ENCODE measurements at regions of chr21 and their contacts with region 1.

Region 1: GRCh38 chr21:24118738-24119459 is 1488.4 kb downstream of the MRPL39 start:
- DNase-seq: peak; percentile 65
- ATAC-seq: peak; percentile 87
- H3K4me3 ChIP-seq: no peak overlapping the region; the same call in 1 of the 2 replicates
- H3K27ac ChIP-seq: peak overlapping the region; percentile 85
- H3K4me1 ChIP-seq: no peaks in the 10 kb centered on the region
- H3K27me3 ChIP-seq: no peaks in the 10 kb centered on the region
- CTCF ChIP-seq: no peak
- POLR2A ChIP-seq: no peak
- RAD21 ChIP-seq: no peak

Region 2: DNA sequence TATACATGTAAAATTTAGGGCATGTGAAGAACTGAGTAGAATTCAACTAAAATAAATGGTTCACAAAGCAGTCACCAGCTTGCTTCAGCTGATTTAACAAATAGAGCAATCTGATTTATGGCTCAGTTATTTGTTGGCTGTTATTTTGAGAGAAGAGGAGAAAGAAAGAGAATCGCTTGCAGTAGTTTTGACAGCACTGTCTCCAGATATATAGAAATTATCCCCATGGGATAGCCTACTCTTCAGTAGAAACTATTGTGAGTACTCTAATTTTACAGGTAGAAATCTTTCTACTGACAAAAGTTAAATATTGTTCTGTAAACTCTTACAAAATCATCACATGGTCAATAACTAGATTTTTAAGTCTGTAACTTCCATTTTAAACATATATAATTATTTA is 390.2 kb after region 1 on chr21:
- CTCF ChIA-PET with region 1: no interaction called
- POLR2A ChIA-PET with region 1: no interaction called
- dilution Hi-C with region 1: no loop called
- in situ Hi-C with region 1: loop called (anchors 10 kb)
- intact Hi-C with region 1: no loop called
- DNase-seq: no peak
- ATAC-seq: no peak
- H3K4me3 ChIP-seq: no peak overlapping the region
- H3K27ac ChIP-seq: no peak overlapping the region
- H3K4me1 ChIP-seq: no peaks in the 10 kb centered on the region
- H3K27me3 ChIP-seq: no peaks in the 10 kb centered on the region
- CTCF ChIP-seq: no peak
- POLR2A ChIP-seq: no peak
- RAD21 ChIP-seq: no peak

Region 3: DNA sequence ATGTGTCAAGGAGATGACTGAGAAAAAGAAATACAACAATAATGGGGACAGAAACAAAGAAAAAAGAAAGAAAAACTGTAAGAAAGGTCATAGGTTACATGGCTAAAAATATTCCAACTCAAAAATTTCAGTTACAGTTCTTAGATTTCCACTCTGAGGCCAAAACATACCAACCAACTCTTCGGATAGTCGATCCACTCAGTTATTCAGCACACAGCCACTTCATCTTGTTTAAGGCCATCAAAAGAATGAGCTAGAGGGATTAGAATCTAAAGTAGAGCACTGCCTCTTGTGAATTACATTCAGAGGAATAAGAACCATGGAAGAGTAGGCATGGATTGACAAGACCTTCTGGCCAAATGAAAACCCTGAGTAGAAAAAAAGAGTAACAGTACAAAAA is 1211.4 kb after region 1 on chr21:
- CTCF ChIA-PET with region 1: no interaction called
- POLR2A ChIA-PET with region 1: no interaction called
- dilution Hi-C with region 1: no loop called
- in situ Hi-C with region 1: no loop called
- intact Hi-C with region 1: loop called (anchors 10 kb)
- DNase-seq: peak; percentile 61
- ATAC-seq: no peak; the same call in 1 of the 2 replicates
- H3K4me3 ChIP-seq: no peak overlapping the region
- H3K27ac ChIP-seq: no peak overlapping the region
- H3K4me1 ChIP-seq: peaks cover 2% of the 10 kb centered on the region; the same call in 1 of the 2 replicates
- H3K27me3 ChIP-seq: no peaks in the 10 kb centered on the region
- CTCF ChIP-seq: no peak
- POLR2A ChIP-seq: no peak
- RAD21 ChIP-seq: no peak